ENCODE measurements at regions of chr10 and their contacts with region 1.

Region 1: GRCh38 chr10:75091146-75091545 is 20.3 kb upstream of the SAMD8 start:
- DNase-seq: no peak
- ATAC-seq: no peak
- H3K4me3 ChIP-seq: no peak overlapping the region
- H3K27ac ChIP-seq: no peak overlapping the region
- H3K4me1 ChIP-seq: no peaks in the 10 kb centered on the region
- H3K27me3 ChIP-seq: no peaks in the 10 kb centered on the region
- CTCF ChIP-seq: no peak

Region 2: GRCh38 chr10:75029857-75030256 is 61.3 kb before region 1 on chr10:
- intact Hi-C with region 1: loop called in 5 of 10 experiments (anchors 5 to 10 kb)
- DNase-seq: peak in 1 of 2 donors; percentile 33
- ATAC-seq: peak; percentile 27 to 72 (median 38)
- H3K4me3 ChIP-seq: no peak overlapping the region
- H3K27ac ChIP-seq: no peak overlapping the region
- H3K4me1 ChIP-seq: peaks cover 0 to 17% (median 8%) of the 10 kb centered on the region in 9 donors
- H3K27me3 ChIP-seq: no peaks in the 10 kb centered on the region
- CTCF ChIP-seq: no peak